Endothelial cell of umbilical vein (primary cell): ENCODE measurements at regions of chr3 and their contacts with region 1.

Region 1: DNA sequence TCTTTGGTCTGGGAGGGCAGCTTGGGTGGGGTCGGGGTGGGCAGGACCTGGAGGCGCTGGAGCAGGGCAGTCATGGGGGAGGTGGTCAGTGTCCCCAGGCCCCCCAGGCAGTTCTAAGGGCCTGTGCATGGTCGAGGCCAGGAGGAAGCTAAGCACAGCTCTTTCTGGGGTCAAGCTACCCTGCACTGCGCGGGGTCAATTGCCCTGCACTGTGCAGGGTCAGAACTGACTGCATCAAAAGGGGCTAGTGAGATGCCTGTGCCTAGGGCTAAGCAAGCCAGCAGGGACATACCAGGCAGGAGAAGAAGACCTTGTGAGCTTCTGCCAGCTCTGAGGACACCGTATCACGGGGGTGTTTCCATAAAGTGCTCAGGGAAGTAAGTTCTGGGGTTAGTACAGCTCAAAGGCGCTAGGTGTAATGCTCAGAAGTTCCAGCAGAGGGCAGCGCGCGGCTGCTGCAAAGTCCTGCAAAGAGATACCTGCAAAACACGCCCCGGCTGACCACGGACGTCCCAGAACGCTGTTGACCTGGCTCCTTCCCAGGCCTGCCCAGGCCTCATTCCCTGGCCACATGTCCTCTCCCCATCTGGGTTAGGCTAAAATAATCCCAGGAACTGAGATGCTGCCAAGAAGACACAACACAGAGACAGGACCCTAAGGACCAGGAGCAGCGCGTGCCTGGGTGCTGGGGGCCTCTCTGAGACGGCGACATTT is 18.8 kb upstream of the IQSEC1 start:
- DNase-seq: peak; percentile 72
- H3K4me3 ChIP-seq: no peak overlapping the region
- H3K27ac ChIP-seq: no peak overlapping the region
- H3K4me1 ChIP-seq: no peaks in the 10 kb centered on the region
- H3K27me3 ChIP-seq: peaks cover 3 to 6% of the 10 kb centered on the region in 2 experiments
- CTCF ChIP-seq: peak; percentile 66 to 95
- POLR2A ChIP-seq: no peak

Region 2: GRCh38 chr3:12613250-12613649 is 478.8 kb before region 1 on chr3:
- CTCF ChIA-PET with region 1: no interaction called
- POLR2A ChIA-PET with region 1: no interaction called
- dilution Hi-C with region 1: no loop called
- intact Hi-C with region 1: no loop called
- DNase-seq: no peak
- H3K4me3 ChIP-seq: no peak overlapping the region
- H3K27ac ChIP-seq: no peak overlapping the region
- H3K4me1 ChIP-seq: no peaks in the 10 kb centered on the region
- H3K27me3 ChIP-seq: no peaks in the 10 kb centered on the region
- CTCF ChIP-seq: no peak
- POLR2A ChIP-seq: no peak

Region 3: GRCh38 chr3:13073326-13074005 is 18.6 kb before region 1 on chr3 and contains the start of gene IQSEC1:
- CTCF ChIA-PET with region 1: interaction called, 22 read pairs
- POLR2A ChIA-PET with region 1: no interaction called
- dilution Hi-C with region 1: no loop called
- intact Hi-C with region 1: no loop called
- DNase-seq: no peak
- H3K4me3 ChIP-seq: no peak within 1 kb of the TSS
- H3K27ac ChIP-seq: no peak within 1 kb of the TSS
- H3K4me1 ChIP-seq: no peaks in the 10 kb centered on the region
- H3K27me3 ChIP-seq: peaks cover 6 to 13% of the 10 kb centered on the region in 2 experiments
- CTCF ChIP-seq: no peak
- POLR2A ChIP-seq: no peak
- total RNA-seq, gene IQSEC1: 15.5 and 18.0 TPM in 2 replicates

Region 4: DNA sequence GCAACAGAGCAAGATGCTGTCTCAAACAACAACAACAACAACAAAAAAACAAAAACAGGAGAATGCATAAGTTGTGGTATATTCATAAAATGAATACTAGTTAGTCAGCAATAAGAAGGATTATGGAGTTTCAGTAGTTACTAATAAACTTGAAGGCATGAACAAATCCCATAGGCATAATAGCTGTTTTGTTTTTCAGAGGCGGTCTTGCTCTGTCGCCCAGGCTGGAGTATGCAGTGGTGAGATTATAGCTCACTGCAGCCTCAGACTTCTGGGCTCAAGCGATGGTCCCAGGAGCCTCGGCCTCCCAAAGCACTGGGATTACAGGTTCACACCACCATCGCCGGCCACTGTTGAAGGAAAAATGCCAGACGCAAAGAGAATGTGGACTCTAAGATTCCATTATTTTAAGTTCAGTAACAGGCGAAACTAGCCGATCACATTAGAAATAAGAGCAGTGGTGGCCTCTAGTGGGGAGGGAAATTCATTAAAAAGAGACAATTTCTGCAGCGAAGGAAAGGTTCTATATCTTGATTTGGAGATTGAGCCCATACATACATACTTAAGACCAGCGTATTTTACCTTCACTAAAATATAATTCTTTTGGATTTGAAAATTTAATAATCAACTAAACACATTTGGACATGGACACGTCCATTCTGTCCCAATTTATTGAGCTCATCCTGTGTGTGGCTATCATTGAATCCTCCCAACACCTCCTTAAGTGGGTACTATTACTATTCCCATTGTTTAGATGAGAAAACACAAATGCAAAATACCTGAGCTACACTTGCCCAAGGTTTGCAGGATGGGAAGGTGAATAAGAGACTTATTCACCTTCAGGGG is 360.7 kb after region 1 on chr3:
- CTCF ChIA-PET with region 1: interaction called, 214 read pairs
- POLR2A ChIA-PET with region 1: no interaction called
- dilution Hi-C with region 1: loop called (anchors 25 kb)
- intact Hi-C with region 1: loop called (anchors 1 kb)
- DNase-seq: peak; percentile 61
- H3K4me3 ChIP-seq: no peak overlapping the region
- H3K27ac ChIP-seq: no peak overlapping the region
- H3K4me1 ChIP-seq: no peaks in the 10 kb centered on the region
- H3K27me3 ChIP-seq: no peaks in the 10 kb centered on the region
- CTCF ChIP-seq: peak; percentile 31 to 32
- POLR2A ChIP-seq: no peak

Region 5: DNA sequence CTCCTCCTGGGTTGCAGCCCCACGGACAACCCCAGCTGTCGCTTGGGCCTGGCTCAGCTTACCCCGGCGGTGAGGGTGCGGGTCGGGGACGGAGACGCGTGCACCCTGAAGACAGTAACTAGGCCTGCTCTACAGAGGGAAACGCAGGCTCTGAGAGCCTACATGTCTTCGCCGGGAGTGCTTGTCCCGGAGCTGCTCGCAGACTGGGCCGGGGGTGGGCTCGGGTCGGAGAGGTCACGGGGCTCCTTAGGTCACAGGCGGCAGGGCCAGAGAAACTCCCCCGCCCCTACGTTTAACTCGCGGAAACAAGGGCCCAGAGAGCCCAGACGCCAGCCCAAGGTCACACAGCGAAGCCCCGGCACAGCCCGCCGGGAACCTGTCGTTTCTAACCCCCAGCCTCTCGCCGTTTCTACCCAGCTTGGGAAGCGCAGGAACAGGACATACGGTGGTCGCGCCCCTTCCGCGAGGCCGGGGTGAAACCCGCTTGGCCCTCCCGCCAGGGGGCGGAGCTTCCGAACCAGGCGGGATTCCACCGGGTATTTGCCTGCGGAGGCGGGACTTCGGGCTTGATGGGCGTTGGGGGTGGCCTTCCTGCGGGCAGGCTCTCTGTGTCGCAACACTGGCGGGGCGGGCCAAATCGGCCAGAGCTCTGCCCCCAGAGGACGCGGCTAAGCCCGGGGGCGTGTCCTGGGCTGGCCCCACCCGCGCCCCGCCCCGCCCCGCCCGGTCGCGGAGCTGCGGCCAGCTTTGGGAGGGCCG is 387.7 kb after region 1 on chr3 and contains the start of gene HDAC11:
- CTCF ChIA-PET with region 1: interaction called, 20 read pairs
- POLR2A ChIA-PET with region 1: no interaction called
- dilution Hi-C with region 1: loop called (anchors 25 kb)
- intact Hi-C with region 1: no loop called
- DNase-seq: peak; percentile 97
- H3K4me3 ChIP-seq: peak within 1 kb of the TSS; percentile 59 to 93 (median 82)
- H3K27ac ChIP-seq: peak within 1 kb of the TSS; percentile 76
- H3K4me1 ChIP-seq: peaks cover 3% of the 10 kb centered on the region
- H3K27me3 ChIP-seq: no peaks in the 10 kb centered on the region
- CTCF ChIP-seq: peak in 1 of 2 donors; percentile 33
- POLR2A ChIP-seq: no peak
- total RNA-seq, gene HDAC11: 8.3 and 8.8 TPM in 2 replicates

Region 6: GRCh38 chr3:13657660-13658435 is 565.8 kb after region 1 on chr3:
- CTCF ChIA-PET with region 1: interaction called, 78 read pairs
- POLR2A ChIA-PET with region 1: no interaction called
- dilution Hi-C with region 1: no loop called
- intact Hi-C with region 1: no loop called
- DNase-seq: peak; percentile 29
- H3K4me3 ChIP-seq: no peak overlapping the region
- H3K27ac ChIP-seq: no peak overlapping the region
- H3K4me1 ChIP-seq: no peaks in the 10 kb centered on the region
- H3K27me3 ChIP-seq: no peaks in the 10 kb centered on the region
- CTCF ChIP-seq: peak; percentile 76 to 92
- POLR2A ChIP-seq: no peak